ENCODE measurements at regions of chr7 and their contacts with region 1.

Region 1: DNA sequence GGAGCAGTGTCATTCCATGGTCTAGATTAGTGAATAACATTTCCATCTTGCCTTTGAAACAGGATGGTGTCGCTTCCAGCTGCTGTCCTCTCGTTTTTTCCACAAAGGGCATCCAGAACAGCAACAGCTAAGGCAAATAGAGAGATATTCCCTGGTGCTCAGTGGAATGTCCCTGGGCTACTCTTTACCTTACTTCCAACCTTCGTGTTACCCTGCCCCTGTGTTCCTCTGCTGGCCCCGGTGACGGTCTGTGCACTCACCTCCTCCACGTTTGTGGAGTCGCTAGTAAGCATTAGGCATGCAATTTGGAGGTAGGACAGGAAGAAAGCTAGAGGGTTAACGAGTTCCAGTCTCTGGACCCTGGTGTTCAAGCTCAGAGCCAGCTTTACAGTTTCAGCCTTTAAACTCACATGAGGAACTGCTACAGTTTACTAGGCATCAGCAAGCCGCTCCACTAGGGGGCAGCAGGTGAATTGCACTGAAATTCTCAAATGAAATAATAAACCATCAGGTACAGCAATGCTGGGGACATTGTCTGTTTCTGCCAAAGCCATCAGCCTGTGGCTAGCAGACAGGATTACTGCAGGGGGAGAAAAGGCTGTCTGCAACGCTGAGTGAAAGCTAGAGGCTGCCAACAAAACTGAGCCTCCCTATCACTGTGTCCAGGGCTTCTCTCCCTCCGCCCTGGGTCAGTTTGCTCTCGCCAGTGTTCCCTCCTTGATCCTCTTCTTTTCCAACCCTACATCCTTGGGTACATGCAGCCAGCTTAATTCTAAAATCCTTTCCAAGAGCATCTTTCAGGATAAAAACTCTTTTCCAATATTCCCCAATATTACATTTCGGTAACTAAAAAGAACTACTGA is 9.0 kb downstream of the MRPL32 start:
- DNase-seq: peak; percentile 89
- H3K4me3 Mint-ChIP-seq: no peak overlapping the region
- H3K27ac Mint-ChIP-seq: no peak overlapping the region
- H3K4me1 Mint-ChIP-seq: peaks cover 19% of the 10 kb centered on the region
- H3K27me3 Mint-ChIP-seq: no peaks in the 10 kb centered on the region

Region 2: DNA sequence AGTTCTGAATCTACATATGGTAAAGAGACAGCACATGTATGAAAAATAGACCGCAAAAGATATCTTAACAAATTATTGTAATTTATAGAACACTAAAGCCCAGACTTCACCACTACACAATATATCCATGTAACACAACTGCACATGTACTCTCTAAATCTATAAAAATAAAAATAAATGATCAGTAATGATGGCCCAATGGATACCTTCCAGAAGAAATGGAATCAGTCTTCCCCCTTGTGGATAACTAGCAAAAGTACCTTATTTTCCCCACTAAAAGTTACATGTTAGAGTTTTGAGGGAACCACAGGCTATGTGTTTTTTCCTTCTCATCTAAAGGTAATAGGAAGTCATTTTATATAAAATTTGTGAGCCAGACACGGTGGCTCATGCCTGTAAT is 55.1 kb before region 1 on chr7:
- CTCF ChIA-PET with region 1: no interaction called
- DNase-seq: no peak
- H3K4me3 Mint-ChIP-seq: no peak overlapping the region
- H3K27ac Mint-ChIP-seq: no peak overlapping the region
- H3K4me1 Mint-ChIP-seq: peaks cover 23% of the 10 kb centered on the region
- H3K27me3 Mint-ChIP-seq: peaks cover 15% of the 10 kb centered on the region

Region 3: DNA sequence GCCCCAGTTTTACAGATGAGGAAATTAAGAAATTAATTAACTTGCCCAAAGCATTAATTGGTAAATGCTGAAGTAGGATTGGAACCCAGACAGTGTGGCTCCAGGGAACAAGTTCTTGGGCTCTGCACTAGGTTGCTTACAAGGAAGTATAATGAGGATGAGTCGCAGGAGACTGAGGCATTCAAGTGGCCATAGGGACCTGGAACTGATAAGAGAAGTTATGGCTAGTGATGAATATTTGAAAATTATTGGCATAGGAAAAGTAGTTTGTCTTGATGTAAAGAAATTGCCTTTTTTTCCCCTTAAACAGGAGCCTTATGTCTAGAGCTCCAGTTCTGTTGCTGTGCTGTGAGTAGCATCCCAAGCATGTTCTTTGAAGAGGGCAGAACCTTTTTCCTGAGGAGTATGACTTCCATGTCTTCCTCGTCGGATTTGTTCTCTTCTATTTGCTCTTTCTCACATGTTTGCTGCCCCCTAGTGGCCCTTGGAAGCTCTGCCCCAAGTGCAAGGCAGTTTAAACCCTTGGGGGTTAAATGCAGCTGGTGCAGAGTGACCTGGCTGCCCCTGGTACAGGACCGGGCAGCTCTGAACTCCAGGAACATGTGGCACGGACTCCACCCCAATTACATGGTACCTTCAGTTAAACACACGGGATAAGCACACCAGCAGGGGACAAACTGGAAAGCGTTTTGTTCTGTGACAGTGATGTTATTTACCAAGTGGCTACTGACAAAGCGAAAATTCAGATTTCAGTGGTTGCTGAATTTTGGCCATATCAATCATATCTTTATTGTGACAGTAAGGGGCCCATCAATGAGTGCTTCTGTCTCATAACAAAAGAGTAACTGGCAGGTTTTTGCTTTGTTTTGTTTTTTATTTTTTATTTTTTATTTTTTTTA is 320.0 kb after region 1 on chr7:
- CTCF ChIA-PET with region 1: interaction called, 21 read pairs
- DNase-seq: peak; percentile 78
- H3K4me3 Mint-ChIP-seq: no peak overlapping the region
- H3K27ac Mint-ChIP-seq: no peak overlapping the region
- H3K4me1 Mint-ChIP-seq: no peaks in the 10 kb centered on the region
- H3K27me3 Mint-ChIP-seq: peaks cover 5% of the 10 kb centered on the region